ENCODE measurements at regions of chr2 and their contacts with region 1.

Region 1: DNA sequence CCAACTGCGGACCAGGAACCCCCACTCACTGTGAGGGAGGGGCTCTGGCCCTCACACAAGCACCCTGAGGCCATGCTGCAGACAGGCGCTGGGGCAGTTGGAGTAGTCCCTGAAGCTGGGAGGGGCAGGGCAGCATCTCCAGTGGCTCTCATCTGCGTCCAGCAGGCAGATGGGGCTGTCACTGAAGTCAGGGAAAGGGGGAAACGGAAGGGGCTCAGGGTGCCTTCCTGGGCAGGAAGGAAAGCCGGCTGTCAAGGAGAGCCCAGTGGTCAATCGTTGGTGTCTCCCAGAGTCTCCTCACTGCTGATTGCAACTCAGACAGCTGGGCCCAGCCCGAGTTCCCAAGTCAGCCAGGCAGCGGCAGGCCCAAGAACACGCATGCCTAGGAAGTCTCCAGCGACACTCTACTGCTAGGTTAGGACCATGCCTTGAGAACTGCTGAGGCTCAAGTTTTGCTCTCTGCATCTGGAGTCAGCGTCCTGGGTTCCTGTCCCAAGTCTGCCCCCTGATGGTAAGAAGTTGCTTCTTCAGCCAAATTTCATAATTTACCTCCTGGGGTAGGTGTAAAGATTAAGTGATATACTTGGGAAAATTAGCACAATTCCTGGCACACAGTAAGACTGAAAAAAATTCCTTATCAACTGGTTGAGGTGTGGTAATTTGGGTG is 27.5 kb upstream of the NMUR1 start:
- DNase-seq: peak; percentile 61 to 73 (median 63)
- ATAC-seq: peak; percentile 94
- H3K4me3 ChIP-seq: no peak overlapping the region
- H3K27ac ChIP-seq: no peak overlapping the region
- H3K4me1 ChIP-seq: peaks cover 0 to 9% of the 10 kb centered on the region in 2 experiments; a peak in 1 of 5 replicates
- H3K27me3 ChIP-seq: no peaks in the 10 kb centered on the region; a peak in 1 of 5 replicates
- CTCF ChIP-seq: peak; percentile 75 to 88 (median 78)
- EP300 ChIP-seq: no peak
- POLR2A ChIP-seq: no peak
- RAD21 ChIP-seq: peak; percentile 81 to 86

Region 2: DNA sequence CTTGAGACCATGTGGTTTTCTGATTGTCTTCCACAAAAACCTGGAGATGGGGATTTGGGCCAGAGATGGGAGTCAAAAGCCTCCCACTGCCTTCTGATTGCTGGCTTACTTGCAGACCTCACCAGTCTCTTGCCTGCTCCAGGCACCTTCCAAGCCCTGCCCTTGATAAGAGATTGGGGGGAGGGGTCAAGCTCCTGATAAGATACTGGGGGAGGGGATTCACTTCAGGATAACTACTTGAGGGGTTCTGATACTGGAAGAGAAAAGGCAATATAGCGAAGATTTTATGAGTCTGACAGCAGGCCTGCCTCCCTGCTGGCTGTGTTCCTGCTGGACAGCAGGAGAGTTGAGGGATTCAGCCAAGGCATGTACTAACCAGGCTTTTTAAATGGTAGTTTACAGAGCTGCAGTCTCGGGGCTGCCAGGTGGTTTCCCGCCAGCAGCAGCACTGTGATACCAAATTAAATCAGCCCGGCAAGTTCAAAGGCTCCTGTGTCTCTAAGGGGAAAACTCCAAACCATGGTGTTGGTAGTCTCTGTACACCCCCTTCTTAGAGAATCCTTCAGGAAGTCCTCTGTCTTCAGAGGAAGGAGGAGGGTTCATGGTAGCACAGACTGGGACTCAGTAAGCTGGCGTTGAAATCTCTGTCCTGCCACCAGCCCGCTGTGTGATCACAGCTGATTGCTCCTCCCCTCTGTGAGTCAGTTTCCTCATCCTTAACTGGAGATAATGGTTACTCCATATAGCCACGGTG is 1577.1 kb before region 1 on chr2:
- CTCF ChIA-PET with region 1: no interaction called
- POLR2A ChIA-PET with region 1: no interaction called
- in situ Hi-C with region 1: no loop called
- intact Hi-C with region 1: no loop called
- DNase-seq: peak; percentile 9 to 64 (median 26)
- ATAC-seq: peak; percentile 88
- H3K4me3 ChIP-seq: peak overlapping the region; percentile 11; the same call in 1 of the 2 replicates
- H3K27ac ChIP-seq: peak overlapping the region; percentile 40; the same call in 1 of the 3 replicates
- H3K4me1 ChIP-seq: peaks cover 9 to 10% of the 10 kb centered on the region in 2 experiments; a peak in 3 of 5 replicates
- H3K27me3 ChIP-seq: no peaks in the 10 kb centered on the region
- CTCF ChIP-seq: no peak
- EP300 ChIP-seq: no peak
- POLR2A ChIP-seq: no peak
- RAD21 ChIP-seq: no peak

Region 3: GRCh38 chr2:231482806-231483391 is 74.8 kb before region 1 on chr2:
- CTCF ChIA-PET with region 1: no interaction called
- POLR2A ChIA-PET with region 1: no interaction called
- in situ Hi-C with region 1: no loop called
- intact Hi-C with region 1: loop called (anchors 2 kb)
- DNase-seq: peak; percentile 60 to 77 (median 70)
- ATAC-seq: peak; percentile 95
- H3K4me3 ChIP-seq: no peak overlapping the region
- H3K27ac ChIP-seq: no peak overlapping the region
- H3K4me1 ChIP-seq: peaks cover 0 to 15% of the 10 kb centered on the region in 2 experiments; a peak in 2 of 5 replicates
- H3K27me3 ChIP-seq: no peaks in the 10 kb centered on the region
- CTCF ChIP-seq: peak; percentile 68 to 76 (median 75)
- EP300 ChIP-seq: no peak
- POLR2A ChIP-seq: no peak
- RAD21 ChIP-seq: peak; percentile 37 to 41

Region 4: DNA sequence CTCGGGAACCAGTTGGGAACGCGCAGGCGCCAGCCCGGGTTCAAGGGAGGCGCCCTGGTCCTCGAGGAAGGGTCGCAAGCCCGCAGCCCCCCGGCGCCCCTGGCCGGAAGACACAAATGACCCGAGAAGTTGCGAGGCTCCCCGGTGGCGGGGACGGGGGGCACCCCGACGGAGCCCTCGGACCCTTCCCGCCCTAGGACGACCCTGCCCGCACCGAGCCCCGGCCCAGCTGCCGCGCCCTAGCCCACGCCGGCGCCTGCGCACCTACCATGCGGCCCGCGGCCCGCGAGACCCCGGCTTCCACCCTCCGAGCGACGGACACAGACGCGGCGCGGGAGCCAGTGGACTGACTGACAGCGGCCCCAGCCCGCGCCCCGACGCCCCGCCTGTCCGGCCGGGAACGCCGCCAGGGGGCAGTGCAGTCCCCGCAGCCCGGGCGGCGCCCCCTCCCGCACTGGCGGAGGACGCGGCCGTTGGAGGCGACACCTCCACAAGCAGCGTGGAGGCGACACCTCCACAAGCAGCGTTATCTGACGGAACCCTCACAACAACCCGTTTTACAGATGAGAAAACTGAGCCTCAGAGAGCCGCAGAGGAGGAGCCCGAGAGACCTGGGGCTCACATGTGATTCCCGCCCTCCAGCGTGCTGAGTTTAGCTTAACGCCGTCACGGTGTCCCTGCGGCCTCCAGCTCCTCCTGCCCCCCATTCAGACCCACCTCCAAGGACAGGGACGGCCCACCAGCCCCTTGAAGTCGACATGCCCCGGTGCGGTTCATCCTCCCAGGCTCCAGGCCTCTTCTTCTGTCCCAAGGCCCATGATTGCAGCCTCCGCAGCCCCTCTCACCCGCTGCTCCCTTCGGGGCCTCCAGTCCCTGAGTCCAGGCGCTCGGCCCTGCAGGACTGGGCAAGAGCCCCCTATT is 27.4 kb before region 1 on chr2 and contains the start of gene NMUR1:
- CTCF ChIA-PET with region 1: interaction called, 12 read pairs
- POLR2A ChIA-PET with region 1: no interaction called
- in situ Hi-C with region 1: no loop called
- intact Hi-C with region 1: no loop called
- DNase-seq: peak; percentile 76 to 84 (median 82)
- ATAC-seq: peak; percentile 96
- H3K4me3 ChIP-seq: peak within 1 kb of the TSS; percentile 34
- H3K27ac ChIP-seq: no peak within 1 kb of the TSS
- H3K4me1 ChIP-seq: peaks cover 0 to 21% of the 10 kb centered on the region in 2 experiments; a peak in 2 of 5 replicates
- H3K27me3 ChIP-seq: peaks cover 0 to 6% of the 10 kb centered on the region in 2 experiments; a peak in 2 of 5 replicates
- CTCF ChIP-seq: peak; percentile 73 to 98 (median 81)
- EP300 ChIP-seq: no peak
- POLR2A ChIP-seq: no peak
- RAD21 ChIP-seq: peak; percentile 81 to 87
- polyA plus RNA-seq, gene NMUR1: 0.01 to 0.06 TPM

Measured in K562 (cell line).